ENCODE measurements at regions of chr4 and their contacts with region 1.

Region 1: DNA sequence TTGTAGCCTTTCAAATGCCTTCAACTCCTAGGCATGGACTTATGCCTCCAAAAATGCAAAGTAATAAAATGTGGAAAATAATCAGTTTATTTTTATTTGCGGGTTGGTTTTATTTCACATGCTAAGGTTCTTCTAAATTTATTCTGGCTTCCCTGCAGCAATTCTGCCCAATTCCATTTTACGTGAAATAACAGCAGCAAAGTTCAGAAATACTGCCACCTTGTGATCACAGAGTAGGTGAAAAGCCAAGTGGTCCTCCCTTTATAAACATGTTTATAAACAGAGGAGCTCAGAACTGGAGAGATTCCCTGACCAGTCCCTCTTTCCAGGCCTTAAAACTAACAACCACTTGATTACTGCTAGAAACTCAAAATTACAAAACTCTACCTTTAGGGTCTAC is 14.7 kb upstream of the DCHS2 start:
- DNase-seq: peak in 3 of 5 donors; percentile 27 to 86 (median 81)
- H3K4me3 ChIP-seq: no peak overlapping the region
- H3K27ac ChIP-seq: no peak overlapping the region
- H3K4me1 ChIP-seq: no peaks in the 10 kb centered on the region
- H3K27me3 ChIP-seq: no peaks in the 10 kb centered on the region
- CTCF ChIP-seq: peak; percentile 50

Region 2: GRCh38 chr4:154399259-154399974 is 106.8 kb before region 1 on chr4:
- intact Hi-C with region 1: loop called (anchors 5 kb)
- DNase-seq: peak in 3 of 5 donors; percentile 19 to 87 (median 76)
- H3K4me3 ChIP-seq: peak overlapping the region; percentile 32 to 71 (median 56)
- H3K27ac ChIP-seq: peak overlapping the region in 1 of 2 donors; percentile 60
- H3K4me1 ChIP-seq: no peaks in the 10 kb centered on the region
- H3K27me3 ChIP-seq: no peaks in the 10 kb centered on the region
- CTCF ChIP-seq: peak; percentile 47

Region 3: DNA sequence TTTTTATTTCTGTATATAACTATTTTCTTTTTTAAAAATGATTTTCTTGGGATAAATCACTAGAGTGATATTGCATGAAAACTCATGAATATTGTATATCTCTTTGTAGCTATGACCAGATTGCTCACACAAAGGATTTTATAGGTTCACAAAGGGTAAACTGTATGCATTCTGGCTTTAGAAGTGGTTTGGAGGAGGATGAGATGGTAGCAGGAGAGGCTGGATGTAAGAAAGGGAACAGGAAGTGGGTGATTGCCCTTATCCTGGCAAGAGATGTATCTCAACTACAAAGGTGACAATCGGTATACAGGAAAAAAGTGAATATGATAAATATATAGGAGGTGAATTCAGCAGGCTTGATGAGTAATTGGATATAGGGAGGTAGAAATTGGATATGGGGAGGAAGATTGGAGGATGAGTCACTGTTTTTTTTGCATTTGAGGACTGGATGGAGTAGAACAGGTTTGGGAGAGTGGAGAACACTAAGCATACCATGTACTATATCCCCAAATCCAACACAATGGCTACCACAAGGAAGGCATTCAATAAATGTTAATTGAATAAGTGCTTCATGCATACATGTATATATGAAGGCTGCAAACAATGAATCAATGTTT is 96.3 kb after region 1 on chr4:
- intact Hi-C with region 1: no loop called
- DNase-seq: no peak
- H3K4me3 ChIP-seq: no peak overlapping the region
- H3K27ac ChIP-seq: no peak overlapping the region
- H3K4me1 ChIP-seq: no peaks in the 10 kb centered on the region
- H3K27me3 ChIP-seq: no peaks in the 10 kb centered on the region
- CTCF ChIP-seq: no peak

Measured in kidney (tissue), 22 donors.